HAP-1 (cell line): ENCODE measurements at regions of chr5 and their contacts with region 1.

Region 1: GRCh38 chr5:176660860-176661641 is 13.8 kb downstream of the TSPAN17 start:
- DNase-seq: peak; percentile 65 to 86
- H3K4me3 ChIP-seq: no peak overlapping the region
- H3K4me1 ChIP-seq: no peaks in the 10 kb centered on the region
- H3K27me3 ChIP-seq: no peaks in the 10 kb centered on the region

Region 2: GRCh38 chr5:176959051-176959450 is 298.0 kb after region 1 on chr5:
- in situ Hi-C with region 1: loop called (anchors 5 kb)
- DNase-seq: peak in 1 of 2 experiments; percentile 46
- H3K4me3 ChIP-seq: no peak overlapping the region
- H3K4me1 ChIP-seq: no peaks in the 10 kb centered on the region
- H3K27me3 ChIP-seq: no peaks in the 10 kb centered on the region

Region 3: DNA sequence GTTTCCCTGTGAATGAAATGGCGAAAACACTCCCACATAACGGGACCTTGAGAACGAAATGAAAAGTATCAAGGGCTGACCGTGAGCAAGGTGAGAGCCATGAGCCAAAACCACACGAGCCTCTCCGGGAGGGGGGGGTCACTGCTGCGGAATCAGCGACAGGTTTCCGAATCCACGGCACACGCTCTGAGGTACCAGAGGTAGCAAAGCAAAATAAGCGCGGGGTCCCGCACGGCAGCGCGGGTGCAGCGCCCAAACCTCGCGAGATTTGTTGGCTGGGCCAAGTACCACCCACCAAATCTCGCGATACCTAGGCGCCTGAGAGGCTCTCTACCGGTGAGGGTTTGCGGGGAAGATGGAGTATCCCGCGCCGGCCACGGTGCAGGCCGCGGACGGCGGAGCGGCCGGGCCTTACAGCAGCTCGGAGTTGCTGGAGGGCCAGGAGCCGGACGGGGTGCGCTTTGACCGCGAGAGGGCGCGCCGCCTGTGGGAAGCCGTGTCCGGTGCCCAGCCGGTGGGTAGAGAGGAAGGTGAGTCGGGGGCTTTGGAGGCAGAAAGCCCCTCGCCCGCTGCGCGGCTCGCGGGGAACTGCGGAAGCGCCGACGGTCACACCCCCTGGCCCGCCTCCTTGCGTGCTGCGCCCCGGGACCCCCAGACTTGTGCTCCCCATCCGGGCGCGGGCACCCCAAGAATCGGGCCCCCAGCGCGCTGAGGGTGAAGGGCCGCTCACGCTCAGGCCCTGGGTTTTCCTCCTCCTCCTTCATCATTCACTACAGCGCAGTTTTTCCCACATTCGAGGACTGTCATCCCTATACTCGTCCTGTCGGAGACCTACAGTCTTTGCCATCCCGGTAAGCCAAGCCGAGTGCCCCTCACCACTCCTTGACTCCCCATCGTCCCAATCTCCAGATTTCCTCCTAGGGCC is 361.6 kb after region 1 on chr5 and contains the start of gene ZNF346:
- in situ Hi-C with region 1: no loop called
- DNase-seq: peak; percentile 86 to 97
- H3K4me3 ChIP-seq: peak within 1 kb of the TSS; percentile 92
- H3K4me1 ChIP-seq: peaks cover 9% of the 10 kb centered on the region
- H3K27me3 ChIP-seq: no peaks in the 10 kb centered on the region

Region 4: DNA sequence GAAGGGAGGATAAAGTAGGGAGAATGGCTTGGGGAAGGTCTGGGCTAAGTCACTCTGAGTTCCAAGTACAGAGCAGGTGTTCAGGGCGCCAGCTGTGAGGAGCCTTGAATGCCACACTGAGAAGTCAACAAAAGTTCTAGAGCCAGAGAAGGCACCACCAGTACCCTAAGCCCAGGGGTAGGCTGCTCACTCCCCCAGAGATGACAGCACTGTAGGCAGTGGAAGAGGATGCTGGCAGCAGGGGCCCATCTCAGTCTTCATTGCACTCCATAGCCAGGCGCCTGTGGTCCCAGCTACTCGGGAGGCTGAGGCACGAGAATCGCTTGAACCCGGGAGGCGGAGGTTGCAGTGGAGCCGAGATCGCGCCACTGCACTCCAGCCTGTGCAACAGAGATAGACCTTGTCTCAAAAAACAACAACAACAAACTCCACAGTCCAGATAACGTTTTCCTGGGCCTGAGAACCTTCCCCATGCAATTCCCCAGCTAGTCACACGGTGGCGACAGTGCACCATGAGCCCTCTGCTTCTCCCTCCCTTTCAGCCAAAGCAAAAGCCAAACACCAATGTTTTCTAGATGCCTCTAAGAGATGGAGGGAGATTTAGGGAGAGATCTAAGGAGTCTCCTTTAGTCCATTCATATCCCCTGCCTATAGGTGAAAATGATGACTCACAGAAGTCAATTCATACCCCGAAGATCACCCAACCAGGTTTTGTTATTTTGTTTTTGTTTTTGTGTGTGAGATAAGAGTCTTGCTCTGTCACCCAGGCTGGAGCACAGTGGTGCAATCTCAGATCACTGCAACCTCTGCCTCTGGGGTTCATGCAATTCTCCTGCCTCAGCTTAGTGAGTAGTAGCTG is 452.7 kb after region 1 on chr5:
- in situ Hi-C with region 1: loop called (anchors 5 kb)
- DNase-seq: peak; percentile 78 to 86
- H3K4me3 ChIP-seq: no peak overlapping the region
- H3K4me1 ChIP-seq: no peaks in the 10 kb centered on the region; the same call in 1 of the 2 replicates
- H3K27me3 ChIP-seq: no peaks in the 10 kb centered on the region

Region 5: GRCh38 chr5:177232761-177233160 is 571.7 kb after region 1 on chr5:
- in situ Hi-C with region 1: no loop called
- DNase-seq: no peak
- H3K4me3 ChIP-seq: no peak overlapping the region
- H3K4me1 ChIP-seq: peaks cover 4% of the 10 kb centered on the region; the same call in 1 of the 2 replicates
- H3K27me3 ChIP-seq: no peaks in the 10 kb centered on the region